ENCODE measurements at regions of chr12 and their contacts with region 1.

Region 1: GRCh38 chr12:122974274-122974891 is 661 bp upstream of the OGFOD2 start:
- DNase-seq: peak; percentile 97
- ATAC-seq: peak; percentile 83
- H3K4me3 ChIP-seq: peak overlapping the region; percentile 87
- H3K27ac ChIP-seq: peak overlapping the region; percentile 87
- H3K4me1 ChIP-seq: peaks cover 10 to 18% of the 10 kb centered on the region in 2 experiments
- H3K27me3 ChIP-seq: no peaks in the 10 kb centered on the region
- CTCF ChIP-seq: no peak
- POLR2A ChIP-seq: peak; percentile 79
- RAD21 ChIP-seq: no peak

Region 2: DNA sequence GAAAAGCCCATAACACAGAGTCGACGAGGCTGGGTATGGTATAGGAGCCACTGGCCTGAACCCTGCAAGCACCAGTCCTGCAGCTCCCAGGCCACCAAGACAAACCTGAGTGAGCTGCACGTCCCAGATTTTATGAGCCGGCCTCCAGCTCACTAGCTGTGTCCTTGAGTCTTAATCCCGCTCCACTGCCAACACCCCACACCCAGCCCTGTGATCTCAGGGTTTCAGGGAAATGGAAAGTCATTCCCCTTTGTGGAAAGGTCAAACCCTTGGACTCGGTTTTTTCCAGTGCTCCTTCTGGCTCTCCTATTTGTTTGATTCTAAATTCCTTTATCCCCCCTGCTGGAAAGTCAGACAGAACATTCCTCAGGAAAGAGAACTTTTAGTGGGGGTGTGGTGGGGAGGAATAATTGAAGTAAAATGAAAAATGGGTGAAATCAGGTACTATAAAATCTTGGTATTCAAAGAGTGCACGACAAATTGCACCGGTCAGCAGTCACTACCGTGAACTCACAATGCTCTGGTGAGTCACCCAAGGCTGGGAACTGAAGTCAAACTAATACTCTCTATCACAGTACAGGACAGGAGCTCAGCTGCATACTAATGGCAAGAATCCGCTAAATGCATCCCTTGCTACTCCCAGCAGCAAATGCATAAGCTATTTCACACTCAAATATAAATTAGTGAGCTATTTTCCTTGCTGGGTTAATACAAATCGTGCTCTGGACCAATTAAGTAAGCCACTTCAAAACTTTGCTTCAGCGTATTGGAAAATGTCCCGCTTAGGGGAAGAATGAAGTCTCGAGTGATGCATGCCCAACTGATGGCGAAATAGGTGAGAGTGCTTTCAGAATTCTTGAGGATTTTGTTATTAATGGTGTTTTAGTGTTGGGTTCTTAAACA is 167.5 kb after region 1 on chr12:
- CTCF ChIA-PET with region 1: no interaction called
- POLR2A ChIA-PET with region 1: interaction called, 3 read pairs
- RAD21 ChIA-PET with region 1: no interaction called
- intact Hi-C with region 1: loop called (anchors 10 kb)
- DNase-seq: peak; percentile 33
- ATAC-seq: peak; percentile 78
- H3K4me3 ChIP-seq: peak overlapping the region; percentile 0 to 52
- H3K27ac ChIP-seq: peak overlapping the region; percentile 86
- H3K4me1 ChIP-seq: peaks cover 49 to 59% of the 10 kb centered on the region in 2 experiments
- H3K27me3 ChIP-seq: no peaks in the 10 kb centered on the region
- CTCF ChIP-seq: no peak
- POLR2A ChIP-seq: no peak
- RAD21 ChIP-seq: peak; percentile 20; the same call in 1 of the 2 replicates

Region 3: DNA sequence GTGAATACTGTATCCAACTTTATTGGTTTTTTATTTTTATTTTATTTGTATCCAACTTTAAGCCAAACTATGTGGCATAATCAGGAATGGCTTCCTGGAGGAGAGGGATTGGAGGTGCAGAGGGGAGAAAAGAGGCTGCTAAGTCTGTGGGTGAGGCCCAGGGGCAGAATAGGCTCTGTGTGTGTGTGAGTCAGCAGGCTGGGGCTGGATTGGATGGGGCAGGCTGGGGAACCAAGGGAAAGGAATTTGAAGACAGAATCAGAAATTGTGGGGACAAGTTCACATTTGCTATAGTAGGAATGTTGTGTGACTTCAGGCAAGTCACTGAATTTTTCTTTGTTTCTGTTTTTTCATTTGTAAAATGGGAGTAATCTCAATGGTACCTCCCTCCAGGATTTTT is 571.9 kb after region 1 on chr12:
- CTCF ChIA-PET with region 1: no interaction called
- POLR2A ChIA-PET with region 1: no interaction called
- RAD21 ChIA-PET with region 1: no interaction called
- intact Hi-C with region 1: no loop called
- DNase-seq: no peak
- ATAC-seq: peak; percentile 82
- H3K4me3 ChIP-seq: no peak overlapping the region
- H3K27ac ChIP-seq: no peak overlapping the region
- H3K4me1 ChIP-seq: peaks cover 0 to 5% of the 10 kb centered on the region in 2 experiments; a peak in 1 of 4 replicates
- H3K27me3 ChIP-seq: no peaks in the 10 kb centered on the region
- CTCF ChIP-seq: no peak
- POLR2A ChIP-seq: no peak
- RAD21 ChIP-seq: no peak

Region 4: GRCh38 chr12:123601602-123602489 is 627.5 kb after region 1 on chr12 and contains the start of gene DDX55:
- CTCF ChIA-PET with region 1: no interaction called
- POLR2A ChIA-PET with region 1: no interaction called
- RAD21 ChIA-PET with region 1: no interaction called
- intact Hi-C with region 1: loop called (anchors 5 kb)
- DNase-seq: peak; percentile 64
- ATAC-seq: peak; percentile 90
- H3K4me3 ChIP-seq: peak within 1 kb of the TSS; percentile 83 to 100
- H3K27ac ChIP-seq: peak within 1 kb of the TSS; percentile 76
- H3K4me1 ChIP-seq: peaks cover 2 to 13% of the 10 kb centered on the region in 2 experiments; a peak in 3 of 4 replicates
- H3K27me3 ChIP-seq: no peaks in the 10 kb centered on the region
- CTCF ChIP-seq: peak; percentile 19 to 38 (median 35); a peak in 4 of 6 replicates
- POLR2A ChIP-seq: peak; percentile 74
- RAD21 ChIP-seq: peak; percentile 75
- total RNA-seq, gene DDX55: 41.8 TPM